ENCODE measurements at regions of chr2 and their contacts with region 1.

Region 1: GRCh38 chr2:175167792-175168563 is at the start of gene ATF2:
- DNase-seq: peak; percentile 87
- ATAC-seq: peak; percentile 92
- H3K4me3 Mint-ChIP-seq: peak within 1 kb of the TSS; percentile 100
- H3K27ac Mint-ChIP-seq: peak within 1 kb of the TSS; percentile 99
- H3K4me1 Mint-ChIP-seq: peaks cover 43% of the 10 kb centered on the region
- H3K27me3 Mint-ChIP-seq: no peaks in the 10 kb centered on the region
- CTCF ChIP-seq: no peak
- total RNA-seq, gene ATF2: 49.0 and 59.9 TPM in 2 replicates

Region 2: GRCh38 chr2:174682578-174683391 is 485.2 kb before region 1 on chr2:
- CTCF ChIA-PET with region 1: no interaction called
- POLR2A ChIA-PET with region 1: no interaction called
- intact Hi-C with region 1: loop called (anchors 2 kb)
- DNase-seq: peak; percentile 63
- ATAC-seq: peak; percentile 74
- H3K4me3 Mint-ChIP-seq: peak overlapping the region; percentile 90
- H3K27ac Mint-ChIP-seq: peak overlapping the region; percentile 83
- H3K4me1 Mint-ChIP-seq: peaks cover 16% of the 10 kb centered on the region
- H3K27me3 Mint-ChIP-seq: no peaks in the 10 kb centered on the region
- CTCF ChIP-seq: no peak

Region 3: GRCh38 chr2:175181104-175181876 is 13.3 kb after region 1 on chr2 and contains the start of gene ATP5MC3:
- CTCF ChIA-PET with region 1: no interaction called
- POLR2A ChIA-PET with region 1: interaction called, 19 read pairs
- intact Hi-C with region 1: loop called (anchors 1 kb)
- DNase-seq: peak; percentile 87
- ATAC-seq: peak; percentile 89
- H3K4me3 Mint-ChIP-seq: peak within 1 kb of the TSS; percentile 94
- H3K27ac Mint-ChIP-seq: peak within 1 kb of the TSS; percentile 83
- H3K4me1 Mint-ChIP-seq: peaks cover 21% of the 10 kb centered on the region
- H3K27me3 Mint-ChIP-seq: no peaks in the 10 kb centered on the region
- CTCF ChIP-seq: no peak
- total RNA-seq, gene ATP5MC3: 147 and 163 TPM in 2 replicates

Region 4: GRCh38 chr2:176001916-176002687 is 834.1 kb after region 1 on chr2 and contains the start of gene LNPK:
- CTCF ChIA-PET with region 1: no interaction called
- POLR2A ChIA-PET with region 1: no interaction called
- intact Hi-C with region 1: loop called (anchors 5 kb)
- DNase-seq: peak; percentile 83
- ATAC-seq: peak; percentile 92
- H3K4me3 Mint-ChIP-seq: peak within 1 kb of the TSS; percentile 82
- H3K27ac Mint-ChIP-seq: peak within 1 kb of the TSS; percentile 31
- H3K4me1 Mint-ChIP-seq: peaks cover 16% of the 10 kb centered on the region
- H3K27me3 Mint-ChIP-seq: no peaks in the 10 kb centered on the region
- CTCF ChIP-seq: no peak
- total RNA-seq, gene LNPK: 15.2 TPM in 2 replicates